ENCODE measurements at regions of chr2 and their contacts with region 1.

Region 1: DNA sequence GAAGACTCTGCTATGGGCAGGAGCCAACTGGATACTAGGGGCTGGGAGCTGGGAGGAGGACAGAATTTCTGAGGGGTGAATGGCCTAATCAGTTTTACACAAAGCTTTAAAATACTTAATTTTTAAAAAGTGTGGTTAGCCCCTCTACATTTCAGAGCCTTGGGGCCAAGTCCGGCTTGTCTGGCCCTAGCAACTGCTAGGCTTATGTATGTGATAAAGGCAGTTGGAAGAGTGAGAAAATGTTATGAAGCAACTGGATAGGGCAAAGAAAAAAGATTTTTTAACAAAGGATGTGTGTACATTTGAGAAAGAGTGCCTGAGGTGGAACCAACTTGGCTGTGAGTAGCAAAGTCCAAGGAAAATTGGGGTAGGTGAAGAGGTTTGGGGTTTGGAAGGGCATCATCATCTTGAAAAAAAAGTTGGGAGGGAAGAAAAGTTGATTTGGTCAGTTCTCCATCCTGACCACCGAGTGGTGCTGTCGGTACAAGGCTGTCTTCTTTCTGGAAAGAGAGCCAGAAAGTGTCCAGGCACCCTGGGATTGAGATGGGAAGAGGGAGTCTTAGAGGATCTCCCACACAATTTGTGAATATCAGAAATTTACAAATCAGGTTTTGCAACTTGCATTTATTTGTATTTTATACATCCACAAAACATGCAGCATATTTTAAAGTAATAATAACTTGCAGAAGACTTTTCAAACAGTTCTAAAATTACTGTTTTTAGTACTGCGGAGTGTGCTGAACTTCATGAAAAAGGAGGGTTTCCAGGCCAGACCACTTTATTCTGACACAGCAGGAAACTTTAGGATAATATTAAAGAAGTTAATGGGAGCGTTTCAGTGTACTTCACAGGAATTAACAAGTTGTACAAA is 10.5 kb upstream of the CDK15 start:
- DNase-seq: peak; percentile 55
- H3K4me3 ChIP-seq: no peak overlapping the region
- H3K27ac ChIP-seq: peak overlapping the region; percentile 3
- H3K4me1 ChIP-seq: peaks cover 34% of the 10 kb centered on the region
- H3K27me3 ChIP-seq: no peaks in the 10 kb centered on the region
- CTCF ChIP-seq: peak; percentile 86 to 88

Region 2: DNA sequence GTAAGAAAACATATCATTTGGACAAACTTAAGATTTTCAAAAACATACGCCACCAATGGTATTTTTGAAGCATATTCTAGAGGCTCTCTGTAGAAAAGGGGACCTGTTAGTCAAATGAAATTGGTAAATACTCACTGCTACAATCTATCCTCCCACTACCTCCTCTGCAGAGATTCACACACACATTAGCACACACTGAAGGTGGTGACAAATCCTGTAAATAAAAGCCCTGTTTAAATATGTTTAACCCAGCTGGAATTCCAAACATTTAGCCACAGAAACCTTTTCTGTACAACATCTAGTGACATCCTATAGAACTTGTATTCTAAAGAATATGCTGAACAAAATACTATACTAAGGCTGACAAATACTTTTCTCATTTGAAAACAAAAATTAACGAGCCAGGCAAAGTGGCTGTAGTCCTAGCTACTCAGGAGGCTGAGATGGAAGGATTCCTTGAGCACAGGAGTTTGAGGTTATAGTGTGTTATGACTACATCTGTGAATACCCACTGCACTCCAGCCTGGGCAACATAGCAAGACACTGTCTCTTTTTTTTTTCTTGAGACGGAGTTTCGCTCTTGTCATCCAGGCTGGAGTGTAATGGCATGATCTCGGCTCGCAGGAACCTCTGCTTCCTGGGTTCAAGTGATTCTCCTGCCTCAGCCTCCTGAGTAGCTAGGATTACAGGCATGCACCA is 41.0 kb before region 1 on chr2:
- CTCF ChIA-PET with region 1: no interaction called
- dilution Hi-C with region 1: no loop called
- in situ Hi-C with region 1: no loop called
- intact Hi-C with region 1: no loop called
- DNase-seq: no peak
- H3K4me3 ChIP-seq: no peak overlapping the region
- H3K27ac ChIP-seq: no peak overlapping the region
- H3K4me1 ChIP-seq: no peaks in the 10 kb centered on the region
- H3K27me3 ChIP-seq: no peaks in the 10 kb centered on the region
- CTCF ChIP-seq: no peak

Region 3: GRCh38 chr2:201831469-201831868 is 35.6 kb after region 1 on chr2:
- CTCF ChIA-PET with region 1: no interaction called
- dilution Hi-C with region 1: no loop called
- in situ Hi-C with region 1: no loop called
- intact Hi-C with region 1: loop called (anchors 5 kb)
- DNase-seq: peak; percentile 95
- H3K4me3 ChIP-seq: no peak overlapping the region
- H3K27ac ChIP-seq: peak overlapping the region; percentile 65
- H3K4me1 ChIP-seq: peaks cover 66% of the 10 kb centered on the region
- H3K27me3 ChIP-seq: no peaks in the 10 kb centered on the region
- CTCF ChIP-seq: no peak

Region 4: GRCh38 chr2:201860636-201861066 is 64.8 kb after region 1 on chr2:
- CTCF ChIA-PET with region 1: no interaction called
- dilution Hi-C with region 1: no loop called
- in situ Hi-C with region 1: loop called in 1 of 2 experiments (anchors 10 kb)
- intact Hi-C with region 1: loop called (anchors 1 kb)
- DNase-seq: peak; percentile 65
- H3K4me3 ChIP-seq: no peak overlapping the region
- H3K27ac ChIP-seq: no peak overlapping the region
- H3K4me1 ChIP-seq: peaks cover 19% of the 10 kb centered on the region
- H3K27me3 ChIP-seq: no peaks in the 10 kb centered on the region
- CTCF ChIP-seq: peak; percentile 86 to 92

Region 5: GRCh38 chr2:201882353-201883090 is 86.7 kb after region 1 on chr2:
- CTCF ChIA-PET with region 1: no interaction called
- dilution Hi-C with region 1: no loop called
- in situ Hi-C with region 1: no loop called
- intact Hi-C with region 1: no loop called
- DNase-seq: peak; percentile 27
- H3K4me3 ChIP-seq: no peak overlapping the region
- H3K27ac ChIP-seq: no peak overlapping the region
- H3K4me1 ChIP-seq: peaks cover 11% of the 10 kb centered on the region
- H3K27me3 ChIP-seq: no peaks in the 10 kb centered on the region
- CTCF ChIP-seq: no peak

Region 6: DNA sequence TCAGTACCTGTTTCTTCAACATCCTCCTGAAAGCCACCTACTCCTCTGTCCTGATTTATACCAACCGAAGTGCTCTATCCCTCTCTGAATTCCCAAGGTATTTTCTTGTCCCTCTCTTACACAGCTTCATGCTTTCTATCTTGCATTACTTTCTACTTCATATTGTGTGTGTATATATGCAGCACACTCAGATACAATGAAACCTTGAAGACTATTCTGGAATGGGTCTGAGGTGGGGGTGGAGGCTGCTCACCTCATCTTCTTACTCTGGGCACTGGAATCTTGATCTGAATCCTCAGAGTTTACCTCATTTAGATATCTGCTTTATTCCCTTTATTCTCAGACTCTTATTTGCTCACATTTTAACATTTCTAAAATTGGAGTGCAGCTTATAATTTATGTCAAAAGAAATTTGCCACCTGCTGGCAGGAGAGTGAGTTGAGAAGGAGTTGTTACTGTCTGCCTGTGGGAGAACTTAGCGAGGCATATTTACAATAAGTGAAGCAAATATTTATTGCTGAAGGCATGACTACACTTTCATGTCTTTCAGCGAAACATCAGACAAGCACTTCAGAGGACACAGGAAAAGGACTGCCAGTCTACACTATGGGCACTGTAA is 260.7 kb after region 1 on chr2:
- CTCF ChIA-PET with region 1: no interaction called
- dilution Hi-C with region 1: no loop called
- in situ Hi-C with region 1: no loop called
- intact Hi-C with region 1: loop called (anchors 1 kb)
- DNase-seq: no peak
- H3K4me3 ChIP-seq: no peak overlapping the region
- H3K27ac ChIP-seq: no peak overlapping the region
- H3K4me1 ChIP-seq: no peaks in the 10 kb centered on the region
- H3K27me3 ChIP-seq: peaks cover 3% of the 10 kb centered on the region
- CTCF ChIP-seq: peak; percentile 22 to 47

Region 7: DNA sequence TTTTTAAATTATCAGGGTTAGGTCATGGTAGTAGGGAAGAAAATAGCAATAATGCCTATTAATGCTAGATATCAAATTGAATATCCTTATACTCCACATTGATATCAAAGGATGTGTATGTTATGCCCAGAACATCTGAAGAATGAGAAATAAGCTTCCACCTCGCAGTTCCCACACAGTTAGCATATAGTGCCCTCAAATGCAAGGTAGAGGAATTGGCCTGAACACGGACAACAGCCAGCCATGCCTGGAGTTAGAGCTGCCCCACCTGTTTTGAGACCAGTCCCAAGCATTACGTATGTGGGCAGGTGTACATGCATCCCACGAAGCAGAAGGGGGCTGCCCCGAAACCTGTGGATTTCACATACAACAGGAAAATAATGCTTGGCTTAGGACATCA is 363.0 kb after region 1 on chr2:
- CTCF ChIA-PET with region 1: no interaction called
- dilution Hi-C with region 1: no loop called
- in situ Hi-C with region 1: loop called in 1 of 2 experiments (anchors 10 kb)
- intact Hi-C with region 1: loop called (anchors 1 kb)
- DNase-seq: no peak
- H3K4me3 ChIP-seq: no peak overlapping the region
- H3K27ac ChIP-seq: no peak overlapping the region
- H3K4me1 ChIP-seq: no peaks in the 10 kb centered on the region
- H3K27me3 ChIP-seq: no peaks in the 10 kb centered on the region
- CTCF ChIP-seq: peak in 1 of 2 donors; percentile 52

Region 8: DNA sequence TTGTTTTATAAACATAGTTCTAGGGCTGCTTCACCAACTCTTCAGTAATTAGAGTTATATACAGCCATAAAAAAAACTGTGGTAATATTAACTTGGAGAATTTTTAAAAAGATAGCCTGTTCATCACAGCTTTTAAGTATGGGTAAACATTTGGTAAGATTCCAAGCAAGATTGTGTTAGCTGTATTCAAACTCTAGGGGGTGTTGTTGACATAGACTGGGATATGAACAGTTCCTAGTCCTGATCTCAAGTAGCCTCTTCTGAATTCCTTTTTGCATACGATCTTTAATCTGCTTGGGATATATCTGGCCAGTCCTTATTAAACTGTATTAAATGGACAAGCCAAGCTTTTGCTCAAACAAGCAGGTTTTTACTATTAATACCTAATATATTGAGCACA is 483.1 kb after region 1 on chr2:
- CTCF ChIA-PET with region 1: no interaction called
- dilution Hi-C with region 1: no loop called
- in situ Hi-C with region 1: no loop called
- intact Hi-C with region 1: loop called (anchors 5 kb)
- DNase-seq: peak; percentile 41
- H3K4me3 ChIP-seq: no peak overlapping the region
- H3K27ac ChIP-seq: peak overlapping the region; percentile 75
- H3K4me1 ChIP-seq: peaks cover 28% of the 10 kb centered on the region
- H3K27me3 ChIP-seq: no peaks in the 10 kb centered on the region
- CTCF ChIP-seq: peak; percentile 52 to 66

Measured in mammary epithelial cell (primary cell).